ENCODE measurements at regions of chr15 and their contacts with region 1.

Region 1: DNA sequence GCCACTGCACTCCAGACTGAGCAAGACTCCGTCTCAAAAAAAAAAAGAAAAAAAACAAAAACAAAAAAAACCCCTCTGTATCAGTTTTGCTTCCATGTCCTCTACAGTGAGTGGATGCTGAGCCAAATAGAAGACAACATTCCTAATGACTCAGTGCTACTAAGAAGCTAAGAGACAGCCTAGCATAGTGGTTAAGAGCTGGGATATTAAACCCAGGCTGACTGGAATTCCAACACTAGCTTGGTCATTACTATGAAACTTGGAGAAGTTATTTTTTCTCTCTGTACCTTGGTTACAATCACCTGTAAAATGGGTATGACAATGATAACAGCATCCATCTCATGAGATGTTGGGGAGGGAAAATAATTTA is 60.9 kb upstream of the PYGO1 start:
- DNase-seq: no peak
- ATAC-seq: no peak
- H3K4me3 ChIP-seq: no peak overlapping the region
- H3K27ac ChIP-seq: no peak overlapping the region
- H3K4me1 ChIP-seq: no peaks in the 10 kb centered on the region
- H3K27me3 ChIP-seq: no peaks in the 10 kb centered on the region
- CTCF ChIP-seq: no peak
- POLR2A ChIP-seq: no peak

Region 2: GRCh38 chr15:55526559-55527036 is 122.4 kb before region 1 on chr15:
- intact Hi-C with region 1: loop called in 7 of 10 experiments (anchors 5 to 10 kb)
- DNase-seq: no peak
- ATAC-seq: peak in 3 of 4 donors; percentile 34 to 58 (median 44)
- H3K4me3 ChIP-seq: no peak overlapping the region
- H3K27ac ChIP-seq: no peak overlapping the region
- H3K4me1 ChIP-seq: no peaks in the 10 kb centered on the region
- H3K27me3 ChIP-seq: peaks cover 0 to 15% (median 0%) of the 10 kb centered on the region in 9 donors
- CTCF ChIP-seq: peak in 10 of 12 donors; percentile 34 to 65 (median 46)
- POLR2A ChIP-seq: no peak

Region 3: DNA sequence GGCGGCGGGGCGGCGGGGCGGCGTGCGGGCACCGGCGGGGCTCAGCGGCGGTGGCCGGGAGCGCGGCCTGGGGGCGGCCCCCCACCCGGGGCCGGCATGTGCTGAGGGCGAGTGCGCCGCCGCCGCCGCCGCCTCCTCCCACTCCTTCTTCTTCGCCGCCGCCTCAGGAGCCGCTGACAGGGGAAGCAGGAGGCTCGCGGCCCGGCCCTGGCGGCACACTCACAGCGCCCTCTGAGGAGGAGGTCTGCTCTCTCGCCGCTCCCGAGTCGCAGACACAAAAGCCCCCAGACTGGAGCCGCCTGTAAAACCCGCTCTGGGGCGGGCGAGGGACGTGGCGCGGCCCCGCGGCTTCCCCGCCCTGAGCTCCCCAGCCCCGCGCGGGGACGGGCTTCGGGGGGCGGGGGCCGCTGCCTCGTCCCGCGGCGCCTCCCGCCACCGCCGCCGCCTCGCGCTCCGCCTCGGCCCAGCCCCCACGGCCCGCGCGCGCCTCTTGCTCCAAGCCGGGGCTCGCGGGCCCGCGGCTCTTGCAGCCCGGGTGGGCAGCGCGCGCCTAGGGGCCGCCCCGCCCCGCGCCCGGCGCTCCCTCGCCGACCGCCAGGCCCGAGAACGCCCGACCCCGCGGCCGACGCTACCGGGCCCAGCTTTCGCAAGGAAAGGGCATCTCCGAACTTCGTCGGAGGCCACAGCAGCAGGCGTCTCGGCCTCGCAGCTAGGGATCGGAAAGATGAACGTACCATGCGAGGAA is 60.8 kb before region 1 on chr15 and contains the start of gene PYGO1:
- intact Hi-C with region 1: loop called in 1 of 10 experiments (anchors 5 kb)
- DNase-seq: peak; percentile 43 to 80 (median 61)
- ATAC-seq: peak; percentile 39 to 87 (median 80)
- H3K4me3 ChIP-seq: peak within 1 kb of the TSS; percentile 51 to 85 (median 64)
- H3K27ac ChIP-seq: peak within 1 kb of the TSS in 9 of 12 donors; percentile 39 to 89 (median 65)
- H3K4me1 ChIP-seq: peaks cover 0 to 13% (median 0%) of the 10 kb centered on the region in 12 donors
- H3K27me3 ChIP-seq: peaks cover 0 to 54% (median 5%) of the 10 kb centered on the region in 9 donors
- CTCF ChIP-seq: no peak
- POLR2A ChIP-seq: no peak
- total RNA-seq, gene PYGO1: 3.9 to 8.2 (median 4.9) TPM

Region 4: DNA sequence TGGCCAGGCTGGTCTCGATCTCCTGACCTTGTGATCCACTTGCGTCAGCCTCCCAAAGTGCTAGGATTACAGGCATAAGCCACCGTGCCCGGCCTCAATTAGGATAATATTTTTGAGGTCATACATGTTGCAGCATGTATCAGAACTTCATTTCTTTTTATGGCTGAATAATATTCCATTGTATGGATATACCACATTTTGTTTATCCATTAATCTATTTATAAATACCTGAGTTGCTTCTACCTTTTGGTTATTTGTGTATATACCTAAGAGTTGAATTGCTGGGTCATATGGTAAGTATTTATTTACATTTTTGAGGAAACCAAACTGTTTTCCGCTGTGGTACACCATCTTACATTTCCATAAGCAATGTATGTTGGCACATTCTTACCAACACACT is 42.8 kb before region 1 on chr15:
- intact Hi-C with region 1: no loop called
- DNase-seq: no peak
- ATAC-seq: no peak
- H3K4me3 ChIP-seq: no peak overlapping the region
- H3K27ac ChIP-seq: no peak overlapping the region
- H3K4me1 ChIP-seq: no peaks in the 10 kb centered on the region
- H3K27me3 ChIP-seq: no peaks in the 10 kb centered on the region
- CTCF ChIP-seq: no peak
- POLR2A ChIP-seq: no peak

Region 5: GRCh38 chr15:55715355-55716076 is 66.5 kb after region 1 on chr15:
- intact Hi-C with region 1: no loop called
- DNase-seq: no peak
- ATAC-seq: no peak
- H3K4me3 ChIP-seq: no peak overlapping the region
- H3K27ac ChIP-seq: no peak overlapping the region
- H3K4me1 ChIP-seq: no peaks in the 10 kb centered on the region
- H3K27me3 ChIP-seq: no peaks in the 10 kb centered on the region
- CTCF ChIP-seq: no peak
- POLR2A ChIP-seq: no peak

Region 6: GRCh38 chr15:55799291-55800212 is 150.5 kb after region 1 on chr15:
- intact Hi-C with region 1: loop called in 9 of 10 experiments (anchors 1 to 5 kb)
- DNase-seq: no peak
- ATAC-seq: no peak
- H3K4me3 ChIP-seq: no peak overlapping the region
- H3K27ac ChIP-seq: no peak overlapping the region
- H3K4me1 ChIP-seq: no peaks in the 10 kb centered on the region
- H3K27me3 ChIP-seq: no peaks in the 10 kb centered on the region
- CTCF ChIP-seq: peak in 11 of 12 donors; percentile 24 to 57 (median 45)
- POLR2A ChIP-seq: no peak

Region 7: GRCh38 chr15:55846116-55846707 is 197.2 kb after region 1 on chr15:
- intact Hi-C with region 1: loop called (anchors 1 to 5 kb)
- DNase-seq: peak in 2 of 5 donors; percentile 41 to 52
- ATAC-seq: peak in 3 of 4 donors; percentile 56 to 68 (median 57)
- H3K4me3 ChIP-seq: no peak overlapping the region
- H3K27ac ChIP-seq: no peak overlapping the region
- H3K4me1 ChIP-seq: no peaks in the 10 kb centered on the region
- H3K27me3 ChIP-seq: no peaks in the 10 kb centered on the region
- CTCF ChIP-seq: peak; percentile 72 to 92 (median 90)
- POLR2A ChIP-seq: no peak

Region 8: GRCh38 chr15:55897560-55898336 is 248.7 kb after region 1 on chr15:
- intact Hi-C with region 1: loop called in 1 of 10 experiments (anchors 5 kb)
- DNase-seq: peak in 3 of 5 donors; percentile 46 to 57 (median 47)
- ATAC-seq: peak; percentile 81 to 94 (median 88)
- H3K4me3 ChIP-seq: peak overlapping the region in 1 of 12 donors; percentile 0
- H3K27ac ChIP-seq: peak overlapping the region; percentile 50 to 82 (median 74)
- H3K4me1 ChIP-seq: peaks cover 0 to 28% (median 15%) of the 10 kb centered on the region in 12 donors
- H3K27me3 ChIP-seq: no peaks in the 10 kb centered on the region
- CTCF ChIP-seq: peak; percentile 69 to 89 (median 82)
- POLR2A ChIP-seq: no peak